Right ventricle myocardium inferior (tissue), 1 donor: ENCODE measurements at regions of chr3 and their contacts with region 1.

Region 1: DNA sequence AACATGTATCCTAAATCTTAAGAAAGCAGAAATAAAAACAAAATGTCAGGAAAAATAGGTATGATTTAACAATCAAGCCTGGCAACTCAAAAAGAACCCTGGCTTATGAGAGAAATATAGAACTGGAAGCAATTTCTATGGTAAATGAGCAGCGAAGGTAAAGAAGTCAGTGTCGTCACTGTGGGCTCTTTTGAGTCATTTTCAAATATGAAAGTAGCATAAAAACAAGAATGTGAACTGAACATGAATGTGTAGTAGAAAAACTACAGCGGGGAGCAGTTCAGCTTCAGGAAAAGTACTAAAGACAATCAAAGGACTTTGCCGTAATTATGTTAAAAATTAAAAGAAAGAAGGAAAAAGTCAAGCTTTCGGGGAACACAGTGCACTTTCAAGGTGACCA is 17.5 kb downstream of the LSG1 start:
- DNase-seq: no peak
- ATAC-seq: no peak

Region 2: GRCh38 chr3:194129581-194130133 is 524.8 kb before region 1 on chr3:
- intact Hi-C with region 1: loop called (anchors 5 kb)
- DNase-seq: no peak
- ATAC-seq: no peak